PC-3 (cell line): ENCODE measurements at regions of chr2 and their contacts with region 1.

Region 1: GRCh38 chr2:30591186-30591585 is 144.1 kb downstream of the LCLAT1 start:
- DNase-seq: no peak
- ATAC-seq: no peak
- H3K4me3 ChIP-seq: no peak overlapping the region
- H3K27ac ChIP-seq: no peak overlapping the region
- H3K4me1 ChIP-seq: peaks cover 4% of the 10 kb centered on the region
- H3K27me3 ChIP-seq: no peaks in the 10 kb centered on the region
- CTCF ChIP-seq: no peak

Region 2: GRCh38 chr2:30464544-30465170 is 126.5 kb before region 1 on chr2:
- CTCF ChIA-PET with region 1: no interaction called
- POLR2A ChIA-PET with region 1: no interaction called
- intact Hi-C with region 1: loop called (anchors 5 kb)
- DNase-seq: no peak
- ATAC-seq: no peak
- H3K4me3 ChIP-seq: no peak overlapping the region
- H3K27ac ChIP-seq: no peak overlapping the region
- H3K4me1 ChIP-seq: 0 out of 2 replicates have a peak, but pooled peaks cover 5% of the 10 kb centered on the region
- H3K27me3 ChIP-seq: no peaks in the 10 kb centered on the region
- CTCF ChIP-seq: no peak

Region 3: DNA sequence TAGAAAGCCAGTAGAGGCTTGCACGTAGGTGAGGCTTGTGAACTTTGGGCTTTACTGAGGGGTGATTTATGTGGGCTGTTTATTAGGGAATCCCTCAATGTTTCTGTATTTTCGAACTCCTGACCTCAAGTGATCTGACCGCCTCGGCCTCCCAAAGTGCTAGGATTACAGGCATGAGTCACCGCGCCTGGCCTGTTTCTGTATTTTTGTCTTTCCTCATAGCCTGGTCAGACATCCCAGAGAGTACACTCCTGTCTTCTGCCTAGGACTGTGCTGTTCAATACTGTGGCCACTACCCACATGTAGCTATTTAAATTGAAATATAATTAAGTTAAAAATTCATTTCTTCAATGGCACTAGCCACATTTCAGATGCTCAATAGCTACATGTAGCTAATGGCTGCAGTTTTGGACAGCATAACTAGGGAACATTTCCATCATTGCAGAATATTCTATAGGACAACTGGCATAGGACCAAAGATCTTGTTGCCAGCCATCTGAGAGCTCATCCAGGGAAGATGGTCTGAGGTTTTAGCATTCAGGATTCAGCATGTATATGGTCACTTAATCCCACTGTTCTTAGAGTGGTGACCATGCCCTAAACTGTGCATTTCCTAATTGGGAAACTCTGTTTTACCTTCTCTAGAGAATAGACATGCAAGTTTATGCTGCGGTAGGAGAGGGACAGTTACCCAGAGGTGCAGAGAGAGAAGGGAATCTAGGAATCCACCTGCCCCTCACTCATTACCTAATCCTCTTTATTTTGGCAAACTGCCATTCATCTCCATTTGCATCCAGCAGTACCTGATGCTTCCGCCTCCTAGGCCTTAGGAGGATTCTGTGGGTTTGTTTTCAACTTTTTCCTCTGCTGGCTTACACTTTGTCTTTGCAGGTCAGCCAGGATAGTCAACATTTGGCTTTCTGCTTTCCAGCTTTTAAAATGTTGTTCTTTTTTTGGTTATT is 79.8 kb before region 1 on chr2:
- CTCF ChIA-PET with region 1: no interaction called
- POLR2A ChIA-PET with region 1: no interaction called
- intact Hi-C with region 1: loop called (anchors 5 kb)
- DNase-seq: peak; percentile 51
- ATAC-seq: peak; percentile 75
- H3K4me3 ChIP-seq: no peak overlapping the region; the same call in 1 of the 2 replicates
- H3K27ac ChIP-seq: no peak overlapping the region
- H3K4me1 ChIP-seq: peaks cover 43% of the 10 kb centered on the region
- H3K27me3 ChIP-seq: no peaks in the 10 kb centered on the region
- CTCF ChIP-seq: no peak